Tibial artery (tissue), 4 donors: ENCODE measurements at regions of chr15 and their contacts with region 1.

Region 1: GRCh38 chr15:56243163-56244037 is at the start of gene RFX7:
- DNase-seq: peak; percentile 69 to 84
- H3K4me3 ChIP-seq: peak within 1 kb of the TSS; percentile 92 to 96
- H3K27ac ChIP-seq: peak within 1 kb of the TSS; percentile 91 to 92
- H3K4me1 ChIP-seq: peaks cover 0 to 31% (median 14%) of the 10 kb centered on the region in 4 donors
- H3K27me3 ChIP-seq: no peaks in the 10 kb centered on the region
- CTCF ChIP-seq: peak in 1 of 2 experiments; percentile 21

Region 2: DNA sequence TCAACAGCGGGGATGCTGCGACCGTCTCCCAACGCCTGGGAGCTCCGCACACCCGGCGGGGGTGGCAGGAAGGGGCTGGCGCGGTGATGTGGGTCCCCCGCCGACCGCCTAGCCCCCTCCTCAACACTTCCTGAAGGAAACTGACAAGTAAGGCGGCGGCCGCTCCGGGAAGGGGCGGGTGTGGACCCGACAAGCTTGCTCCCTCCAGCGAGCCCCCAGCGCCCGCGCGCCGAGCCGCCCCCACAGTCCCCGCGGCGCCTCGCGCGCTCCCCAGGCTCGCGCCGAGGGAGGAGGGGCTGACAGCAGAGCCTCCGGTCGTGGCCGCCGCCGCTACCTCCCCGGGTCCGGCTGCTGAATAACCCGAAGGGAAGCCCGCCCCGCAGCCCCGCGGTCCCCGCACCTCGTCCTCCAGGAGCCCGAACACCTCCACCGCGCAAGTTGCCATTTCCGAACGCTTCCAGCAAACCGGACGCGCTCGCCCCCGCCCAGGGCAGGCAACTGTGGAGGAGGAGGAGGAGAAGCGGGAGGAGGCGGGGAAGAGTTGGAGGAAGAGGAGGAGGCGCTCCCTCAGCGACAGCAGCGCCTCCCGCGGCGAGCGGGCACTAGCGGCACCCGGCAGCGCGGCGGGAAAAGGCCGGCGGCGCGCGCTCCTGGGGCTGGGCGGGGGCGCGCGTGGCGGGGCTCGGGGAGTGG is 250.1 kb before region 1 on chr15 and contains the start of gene NEDD4:
- intact Hi-C with region 1: loop called (anchors 5 kb)
- DNase-seq: peak; percentile 87 to 93
- H3K4me3 ChIP-seq: peak within 1 kb of the TSS; percentile 85 to 87
- H3K27ac ChIP-seq: peak within 1 kb of the TSS; percentile 88 to 95
- H3K4me1 ChIP-seq: peaks cover 0 to 25% (median 15%) of the 10 kb centered on the region in 4 donors
- H3K27me3 ChIP-seq: no peaks in the 10 kb centered on the region
- CTCF ChIP-seq: peak; percentile 38 to 45

Region 3: GRCh38 chr15:56629133-56629532 is 385.7 kb after region 1 on chr15:
- intact Hi-C with region 1: no loop called
- DNase-seq: no peak
- H3K4me3 ChIP-seq: no peak overlapping the region
- H3K27ac ChIP-seq: no peak overlapping the region
- H3K4me1 ChIP-seq: no peaks in the 10 kb centered on the region
- H3K27me3 ChIP-seq: no peaks in the 10 kb centered on the region
- CTCF ChIP-seq: no peak